Activated naive CD4-positive, alpha-beta T cell treated with anti-CD3 and anti-CD28 coated beads, Interleukin-2, amount 10 ng/mL, durations not matched to agents 7 days and 5 days (primary cell): ENCODE measurements at regions of chr2 and their contacts with region 1.

Region 1: DNA sequence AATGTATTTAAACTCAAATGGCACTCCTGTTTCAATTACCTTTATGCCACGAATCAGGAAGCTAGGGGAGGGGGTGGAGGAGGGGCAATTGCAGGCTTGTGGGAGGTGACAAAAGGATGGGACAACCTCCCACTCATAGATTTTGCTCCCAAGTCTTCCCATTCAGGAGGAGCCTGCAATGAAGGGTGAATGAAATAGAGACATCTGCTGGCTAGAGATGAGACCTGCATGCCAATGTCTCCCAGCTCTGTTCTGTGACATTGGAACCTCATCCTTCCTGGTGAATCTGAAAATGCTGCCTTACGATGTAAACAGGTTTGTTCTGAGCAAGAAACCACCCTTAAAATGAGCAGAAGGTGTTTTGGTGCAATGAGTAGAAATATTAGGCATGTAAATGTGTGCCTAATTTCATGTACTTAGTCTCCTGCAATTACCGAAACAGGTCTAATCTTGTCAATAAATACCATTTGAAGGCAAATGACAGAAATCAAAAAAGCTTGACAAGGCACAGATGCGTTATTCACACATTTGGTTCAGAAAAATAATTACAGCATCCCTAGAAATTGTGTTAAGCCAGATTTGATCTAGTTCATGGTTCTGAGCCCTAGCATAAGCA is 2.7 kb upstream of the PID1 start:
- DNase-seq: no peak
- H3K4me3 Mint-ChIP-seq: no peak overlapping the region
- H3K27ac Mint-ChIP-seq: no peak overlapping the region
- H3K4me1 Mint-ChIP-seq: no peaks in the 10 kb centered on the region
- H3K27me3 Mint-ChIP-seq: peaks cover 18% of the 10 kb centered on the region

Region 2: GRCh38 chr2:227890495-227891079 is 1383.2 kb before region 1 on chr2:
- CTCF ChIA-PET with region 1: interaction called, 15 read pairs
- DNase-seq: no peak
- H3K4me3 Mint-ChIP-seq: no peak overlapping the region
- H3K27ac Mint-ChIP-seq: no peak overlapping the region
- H3K4me1 Mint-ChIP-seq: no peaks in the 10 kb centered on the region
- H3K27me3 Mint-ChIP-seq: no peaks in the 10 kb centered on the region

Region 3: DNA sequence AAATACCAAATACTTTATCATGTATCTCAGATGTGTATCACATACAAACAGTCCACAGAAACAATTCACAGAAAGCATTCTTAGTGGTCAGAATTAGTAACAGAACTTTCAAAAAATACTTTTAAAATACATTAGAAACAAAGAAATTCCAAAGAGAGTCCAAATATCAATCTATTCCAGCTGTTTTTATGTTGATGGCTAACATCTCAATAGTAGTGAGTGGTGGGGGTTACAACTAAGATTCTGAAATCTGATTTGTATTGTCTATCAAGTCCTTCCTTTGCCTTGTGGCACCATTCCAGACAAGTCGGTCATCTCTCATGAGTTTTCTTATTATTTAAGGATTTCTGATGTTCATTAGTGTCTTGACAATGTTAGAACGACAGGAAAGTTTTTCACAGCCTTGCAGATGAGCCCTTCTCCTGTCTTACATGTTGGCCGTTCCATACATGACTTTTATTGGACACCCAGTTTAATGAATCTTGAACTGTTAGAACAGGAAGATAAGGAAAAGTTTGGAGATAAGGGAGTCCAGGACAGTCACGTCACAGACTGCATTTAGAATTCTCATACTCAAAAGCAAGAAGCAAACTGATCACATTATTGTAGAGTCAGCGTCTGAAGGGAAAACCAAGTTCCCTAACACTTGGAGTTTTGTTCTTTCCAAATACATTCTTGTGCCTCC is 413.1 kb before region 1 on chr2:
- CTCF ChIA-PET with region 1: no interaction called
- DNase-seq: no peak
- H3K4me3 Mint-ChIP-seq: no peak overlapping the region
- H3K27ac Mint-ChIP-seq: no peak overlapping the region
- H3K4me1 Mint-ChIP-seq: no peaks in the 10 kb centered on the region
- H3K27me3 Mint-ChIP-seq: no peaks in the 10 kb centered on the region

Region 4: GRCh38 chr2:229350126-229350812 is 76.4 kb after region 1 on chr2:
- CTCF ChIA-PET with region 1: no interaction called
- DNase-seq: no peak
- H3K4me3 Mint-ChIP-seq: no peak overlapping the region
- H3K27ac Mint-ChIP-seq: no peak overlapping the region
- H3K4me1 Mint-ChIP-seq: no peaks in the 10 kb centered on the region
- H3K27me3 Mint-ChIP-seq: no peaks in the 10 kb centered on the region